Ascending aorta (tissue), 2 donors: ENCODE measurements at regions of chrX and their contacts with region 1.

Region 1: DNA sequence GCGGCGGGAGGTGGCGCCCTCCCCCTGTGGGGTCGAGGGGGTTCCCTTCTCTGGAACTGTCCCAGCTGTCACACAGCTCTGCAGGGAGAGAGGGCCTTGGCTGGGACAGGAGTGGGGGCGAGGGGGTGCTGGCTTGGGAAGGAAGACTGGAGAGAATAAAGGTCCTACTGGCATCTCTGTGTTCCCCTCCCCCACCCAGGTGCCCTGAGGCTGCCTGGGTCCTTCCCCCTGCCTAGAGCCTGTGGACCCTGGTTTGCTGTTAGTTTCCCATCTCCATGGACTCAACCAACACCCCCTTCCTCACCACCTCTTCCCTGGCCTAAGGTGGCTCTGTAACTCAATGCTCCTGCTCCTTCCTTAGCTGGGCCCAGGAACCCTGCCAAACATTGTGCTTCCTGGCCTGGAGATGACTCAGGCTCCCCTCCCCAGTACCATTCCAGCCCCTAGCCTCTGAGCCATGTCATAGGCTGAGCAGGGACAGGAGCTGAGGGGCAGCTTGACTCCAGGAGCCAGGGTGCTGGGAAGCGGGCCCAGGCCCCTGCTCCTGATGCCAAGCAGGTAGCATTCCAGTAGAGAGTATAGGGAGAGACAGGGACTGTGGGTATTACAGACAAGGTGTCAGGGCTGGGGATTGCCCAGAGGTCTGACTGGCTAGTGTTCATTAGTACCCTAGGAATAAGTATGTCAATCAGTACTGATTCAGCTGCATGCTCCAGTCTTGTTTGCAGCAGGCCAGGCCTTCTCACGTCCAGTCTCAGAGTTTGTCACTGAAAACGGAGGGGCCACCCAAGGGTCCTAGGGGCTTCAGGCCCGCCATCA is 100.7 kb downstream of the EFNB1 start:
- DNase-seq: peak; percentile 19 to 68
- H3K4me3 ChIP-seq: no peak overlapping the region
- H3K27ac ChIP-seq: peak overlapping the region; percentile 40 to 53
- H3K4me1 ChIP-seq: peaks cover 0 to 4% of the 10 kb centered on the region in 2 donors
- H3K27me3 ChIP-seq: no peaks in the 10 kb centered on the region
- CTCF ChIP-seq: no peak

Region 2: DNA sequence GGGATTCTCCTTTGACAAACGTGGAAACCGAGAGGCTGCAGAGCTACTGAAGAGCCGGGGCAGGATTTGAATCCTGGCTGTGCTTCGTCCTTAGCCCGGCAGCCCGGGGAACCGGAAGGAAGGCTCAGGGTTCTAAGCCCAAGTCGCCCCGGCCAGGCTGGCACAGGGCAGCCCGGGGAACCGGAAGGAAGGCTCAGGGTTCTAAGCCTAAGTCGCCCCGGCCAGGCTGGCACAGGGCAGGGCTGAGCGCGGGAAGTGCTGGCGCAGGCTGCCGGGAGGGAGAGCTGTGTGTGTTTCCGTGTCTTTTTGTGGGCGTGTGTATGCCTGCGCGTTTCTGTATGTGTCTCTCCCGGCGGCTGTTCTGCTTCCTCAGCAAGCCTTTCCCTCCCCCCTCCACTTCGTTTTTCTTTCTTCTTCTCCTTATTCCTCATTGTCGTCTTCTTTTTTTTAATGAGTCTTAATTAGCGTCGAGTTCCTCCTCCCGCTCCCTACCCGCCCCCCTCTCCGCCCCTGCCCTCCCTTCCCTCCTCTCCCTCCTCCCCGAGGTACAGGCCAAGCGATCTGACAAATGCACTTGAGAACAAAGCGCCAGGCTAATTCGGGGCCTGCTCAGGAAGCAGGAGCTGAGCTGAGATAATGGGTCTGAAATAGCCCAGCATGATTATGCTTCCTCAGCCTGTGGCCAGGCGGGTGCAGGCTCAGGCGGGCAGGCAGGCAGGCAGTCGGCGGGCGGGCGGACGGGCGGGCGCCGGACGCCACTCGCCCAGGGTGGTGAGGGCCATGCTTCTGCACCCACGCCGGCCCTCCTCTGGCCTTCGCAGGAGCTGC is 34.8 kb before region 1 on chrX:
- intact Hi-C with region 1: loop called (anchors 2 kb)
- DNase-seq: peak; percentile 31 to 84
- H3K4me3 ChIP-seq: peak overlapping the region in 1 of 2 donors; percentile 54
- H3K27ac ChIP-seq: peak overlapping the region; percentile 97
- H3K4me1 ChIP-seq: peaks cover 3 to 13% of the 10 kb centered on the region in 2 donors
- H3K27me3 ChIP-seq: no peaks in the 10 kb centered on the region
- CTCF ChIP-seq: no peak

Region 3: GRCh38 chrX:69014200-69014599 is 84.7 kb after region 1 on chrX:
- intact Hi-C with region 1: no loop called
- DNase-seq: peak in 1 of 2 donors; percentile 40
- H3K4me3 ChIP-seq: no peak overlapping the region
- H3K27ac ChIP-seq: no peak overlapping the region
- H3K4me1 ChIP-seq: no peaks in the 10 kb centered on the region
- H3K27me3 ChIP-seq: no peaks in the 10 kb centered on the region
- CTCF ChIP-seq: no peak